PC-3 (cell line): ENCODE measurements at regions of chr12 and their contacts with region 1.

Region 1: DNA sequence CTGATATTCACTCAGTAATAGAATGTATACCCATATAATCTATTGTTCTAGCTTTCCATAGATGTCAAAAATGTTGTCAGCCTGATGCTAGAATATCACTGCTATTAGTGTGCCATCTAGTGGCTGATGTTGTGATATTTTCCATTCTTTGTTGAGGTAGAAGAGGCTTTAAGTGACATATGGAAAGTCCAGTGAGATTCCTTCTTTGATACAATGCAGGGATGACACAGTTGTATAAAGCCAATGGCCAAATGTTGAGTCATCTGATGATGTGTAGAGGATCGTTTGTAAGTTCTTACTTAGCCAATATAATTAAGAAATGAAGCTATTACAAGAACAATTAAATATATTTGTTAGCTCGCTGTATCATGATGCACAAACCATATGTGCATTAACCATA is 58.1 kb upstream of the PCED1B start:
- DNase-seq: peak; percentile 97
- ATAC-seq: peak; percentile 62
- H3K4me3 ChIP-seq: no peak overlapping the region
- H3K27ac ChIP-seq: no peak overlapping the region
- H3K4me1 ChIP-seq: peaks cover 45% of the 10 kb centered on the region
- H3K27me3 ChIP-seq: no peaks in the 10 kb centered on the region
- CTCF ChIP-seq: peak; percentile 85

Region 2: GRCh38 chr12:46124848-46125619 is 896.3 kb before region 1 on chr12:
- CTCF ChIA-PET with region 1: no interaction called
- POLR2A ChIA-PET with region 1: no interaction called
- intact Hi-C with region 1: loop called (anchors 5 kb)
- DNase-seq: peak; percentile 80
- ATAC-seq: peak; percentile 91
- H3K4me3 ChIP-seq: peak overlapping the region; percentile 66
- H3K27ac ChIP-seq: no peak overlapping the region
- H3K4me1 ChIP-seq: peaks cover 20% of the 10 kb centered on the region
- H3K27me3 ChIP-seq: no peaks in the 10 kb centered on the region
- CTCF ChIP-seq: peak; percentile 71

Region 3: DNA sequence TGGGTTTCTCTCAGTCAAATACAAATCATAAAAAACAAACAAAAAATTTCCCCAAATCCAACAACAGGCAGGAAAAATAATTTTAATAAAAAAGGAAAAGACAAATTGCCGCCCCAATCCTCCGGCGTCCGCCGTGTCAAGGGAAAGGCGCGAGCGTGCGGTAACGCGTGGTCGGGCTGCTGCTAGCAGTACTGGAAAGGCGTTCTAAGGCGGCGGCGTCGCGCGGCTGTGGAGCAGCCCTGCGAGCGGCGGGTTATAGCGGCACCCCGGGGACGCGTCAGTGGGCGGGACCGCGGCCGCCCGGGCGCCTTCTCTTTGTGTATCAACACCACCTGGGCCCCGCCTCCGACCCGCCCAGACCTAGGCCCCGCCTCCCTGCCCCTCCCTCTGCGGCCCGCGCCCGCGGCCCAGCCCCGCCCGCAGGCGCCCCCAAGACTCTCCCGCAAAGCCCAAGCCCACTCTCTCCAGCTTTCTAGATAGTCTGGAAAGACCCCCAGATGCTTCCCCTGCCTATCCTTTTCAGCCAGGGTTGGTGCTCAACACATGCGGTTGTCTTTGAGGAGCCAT is 648.7 kb before region 1 on chr12 and contains the start of gene SLC38A2:
- CTCF ChIA-PET with region 1: no interaction called
- POLR2A ChIA-PET with region 1: interaction called, 4 read pairs
- intact Hi-C with region 1: loop called (anchors 2 kb)
- DNase-seq: peak; percentile 93
- ATAC-seq: peak; percentile 85
- H3K4me3 ChIP-seq: peak within 1 kb of the TSS; percentile 83
- H3K27ac ChIP-seq: peak within 1 kb of the TSS; percentile 80
- H3K4me1 ChIP-seq: peaks cover 40% of the 10 kb centered on the region
- H3K27me3 ChIP-seq: no peaks in the 10 kb centered on the region
- CTCF ChIP-seq: no peak
- total RNA-seq, gene SLC38A2: 214 and 232 TPM in 2 replicates

Region 4: DNA sequence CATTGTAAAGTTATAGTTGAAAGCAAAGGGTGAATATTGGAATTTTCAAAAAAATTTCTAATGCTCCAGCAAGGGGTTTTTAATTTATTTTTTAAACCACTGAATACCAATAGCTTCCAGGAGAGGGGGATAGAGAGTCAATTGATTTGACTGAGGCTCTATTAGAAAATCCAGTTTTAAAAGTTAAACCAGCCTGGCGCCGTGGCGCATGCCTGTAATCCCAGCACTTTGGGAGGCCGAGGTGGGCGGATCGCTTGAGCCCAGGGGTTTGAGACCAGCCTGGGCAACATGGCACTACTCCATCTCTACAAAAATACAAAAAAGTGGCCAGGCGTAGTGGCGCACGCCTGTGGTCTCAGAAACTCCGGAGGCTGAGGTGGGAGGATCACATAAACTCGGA is 345.6 kb before region 1 on chr12:
- CTCF ChIA-PET with region 1: interaction called, 8 read pairs
- POLR2A ChIA-PET with region 1: no interaction called
- intact Hi-C with region 1: loop called (anchors 2 kb)
- DNase-seq: peak; percentile 71
- ATAC-seq: no peak
- H3K4me3 ChIP-seq: no peak overlapping the region
- H3K27ac ChIP-seq: peak overlapping the region; percentile 68
- H3K4me1 ChIP-seq: peaks cover 44% of the 10 kb centered on the region
- H3K27me3 ChIP-seq: no peaks in the 10 kb centered on the region
- CTCF ChIP-seq: peak; percentile 65

Region 5: GRCh38 chr12:46970636-46971035 is 50.7 kb before region 1 on chr12:
- CTCF ChIA-PET with region 1: no interaction called
- POLR2A ChIA-PET with region 1: no interaction called
- intact Hi-C with region 1: no loop called
- DNase-seq: no peak
- ATAC-seq: no peak
- H3K4me3 ChIP-seq: no peak overlapping the region
- H3K27ac ChIP-seq: no peak overlapping the region
- H3K4me1 ChIP-seq: no peaks in the 10 kb centered on the region
- H3K27me3 ChIP-seq: no peaks in the 10 kb centered on the region
- CTCF ChIP-seq: no peak

Region 6: DNA sequence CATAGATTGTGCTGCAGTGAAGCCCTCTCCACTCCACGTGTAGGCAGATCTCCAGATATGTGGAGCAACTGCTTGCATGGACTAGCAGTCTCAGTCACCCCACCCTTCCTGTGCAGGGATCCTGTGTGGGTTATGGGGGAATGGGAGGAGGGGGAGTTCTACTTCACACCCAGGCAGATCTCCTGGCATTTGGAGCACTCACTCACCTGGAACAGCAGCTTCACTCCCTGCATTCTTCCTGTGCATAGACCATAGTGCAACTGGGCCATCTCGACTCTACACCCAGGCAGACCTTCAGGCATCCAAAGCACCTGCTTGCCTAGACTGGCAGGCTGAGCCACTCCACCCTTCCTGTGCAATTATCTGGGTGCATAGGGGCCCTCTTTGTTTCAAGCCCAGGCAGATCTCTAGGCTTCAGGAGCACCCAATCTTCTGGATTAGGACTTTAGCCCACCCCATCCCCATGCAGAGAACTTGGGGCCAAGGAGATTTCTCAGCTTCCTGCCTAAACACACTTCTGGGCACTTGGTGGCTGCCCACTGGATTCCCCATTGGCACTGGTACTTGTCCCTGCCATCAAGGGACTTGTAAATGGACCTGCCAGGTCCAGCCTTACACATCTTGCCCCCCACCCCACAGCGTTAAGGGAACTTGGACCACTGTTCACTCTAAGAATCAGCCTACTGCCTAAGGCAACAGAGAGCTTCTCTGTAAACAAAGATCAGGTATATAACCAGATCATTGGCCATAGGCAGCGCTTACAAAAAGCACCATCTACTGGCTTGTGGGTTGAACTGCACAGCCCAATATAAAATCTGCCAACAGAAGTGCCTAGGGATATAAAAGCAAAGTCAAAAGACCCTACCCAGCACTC is 37.7 kb before region 1 on chr12:
- CTCF ChIA-PET with region 1: interaction called, 12 read pairs
- POLR2A ChIA-PET with region 1: no interaction called
- intact Hi-C with region 1: loop called (anchors 1 kb)
- DNase-seq: peak; percentile 86
- ATAC-seq: peak; percentile 93
- H3K4me3 ChIP-seq: no peak overlapping the region
- H3K27ac ChIP-seq: no peak overlapping the region
- H3K4me1 ChIP-seq: peaks cover 7% of the 10 kb centered on the region; the same call in 1 of the 2 replicates
- H3K27me3 ChIP-seq: no peaks in the 10 kb centered on the region
- CTCF ChIP-seq: peak; percentile 94